Mammary epithelial cell (primary cell): ENCODE measurements at regions of chr20 and their contacts with region 1.

Region 1: DNA sequence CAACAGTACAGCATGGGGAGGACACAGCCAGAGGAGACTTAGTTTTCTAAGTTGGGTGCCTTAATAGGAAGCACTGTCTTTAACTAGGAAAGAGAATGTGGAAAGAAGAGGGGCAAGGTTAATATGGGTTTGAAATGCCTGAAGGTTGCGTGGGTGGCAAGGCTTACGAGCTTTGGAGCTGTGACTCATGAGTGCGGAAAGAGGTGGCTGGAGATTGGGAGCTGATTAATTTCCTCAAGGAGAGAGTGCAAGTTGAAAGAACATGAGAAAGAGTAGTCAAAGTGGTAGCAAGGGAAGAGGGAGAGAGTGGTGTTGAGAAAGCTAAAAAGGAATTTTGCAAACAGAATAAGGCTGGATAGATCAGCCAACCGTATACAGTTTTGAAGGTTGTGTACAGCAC is 315.1 kb upstream of the PRND start:
- DNase-seq: peak; percentile 92
- H3K4me3 ChIP-seq: no peak overlapping the region
- H3K27ac ChIP-seq: no peak overlapping the region
- H3K4me1 ChIP-seq: peaks cover 21% of the 10 kb centered on the region
- H3K27me3 ChIP-seq: no peaks in the 10 kb centered on the region
- CTCF ChIP-seq: no peak

Region 2: DNA sequence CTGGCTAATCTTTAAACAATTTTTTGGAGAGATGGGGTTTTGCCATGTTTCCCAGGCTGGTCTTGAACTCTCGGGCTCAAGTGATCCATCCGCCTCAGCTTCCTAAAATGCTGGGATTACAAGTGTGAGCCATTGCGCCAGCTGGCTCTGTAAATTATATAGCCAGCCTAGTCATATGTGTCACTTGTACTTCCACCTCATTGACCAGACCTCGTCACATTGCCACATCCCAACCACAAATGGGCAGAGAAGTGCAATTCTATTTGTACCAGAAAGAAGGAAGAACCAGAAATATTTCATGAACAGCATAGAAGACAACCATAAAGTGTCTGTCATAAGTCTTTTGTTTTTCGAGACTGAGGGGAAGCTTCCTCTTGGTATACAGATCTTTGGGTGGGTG is 86.3 kb before region 1 on chr20:
- CTCF ChIA-PET with region 1: no interaction called
- dilution Hi-C with region 1: loop called (anchors 5 kb)
- in situ Hi-C with region 1: no loop called
- intact Hi-C with region 1: no loop called
- DNase-seq: no peak
- H3K4me3 ChIP-seq: no peak overlapping the region
- H3K27ac ChIP-seq: no peak overlapping the region
- H3K4me1 ChIP-seq: no peaks in the 10 kb centered on the region
- H3K27me3 ChIP-seq: no peaks in the 10 kb centered on the region
- CTCF ChIP-seq: no peak